Panc1 (cell line): ENCODE measurements at regions of chr1 and their contacts with region 1.

Region 1: GRCh38 chr1:65535981-65536380 is 115.5 kb downstream of the LEPR start:
- DNase-seq: no peak
- ATAC-seq: no peak
- H3K4me3 ChIP-seq: no peak overlapping the region
- H3K27ac ChIP-seq: no peak overlapping the region
- H3K4me1 ChIP-seq: no peaks in the 10 kb centered on the region
- H3K27me3 ChIP-seq: no peaks in the 10 kb centered on the region
- CTCF ChIP-seq: no peak

Region 2: GRCh38 chr1:65469889-65470340 is 66.1 kb before region 1 on chr1:
- CTCF ChIA-PET with region 1: no interaction called
- POLR2A ChIA-PET with region 1: no interaction called
- in situ Hi-C with region 1: no loop called
- intact Hi-C with region 1: loop called (anchors 2 kb)
- DNase-seq: no peak
- ATAC-seq: no peak
- H3K4me3 ChIP-seq: no peak overlapping the region
- H3K27ac ChIP-seq: no peak overlapping the region
- H3K4me1 ChIP-seq: no peaks in the 10 kb centered on the region
- H3K27me3 ChIP-seq: no peaks in the 10 kb centered on the region
- CTCF ChIP-seq: no peak

Region 3: GRCh38 chr1:65514083-65514482 is 21.9 kb before region 1 on chr1:
- CTCF ChIA-PET with region 1: no interaction called
- POLR2A ChIA-PET with region 1: no interaction called
- in situ Hi-C with region 1: no loop called
- intact Hi-C with region 1: no loop called
- DNase-seq: no peak
- ATAC-seq: no peak
- H3K4me3 ChIP-seq: no peak overlapping the region
- H3K27ac ChIP-seq: no peak overlapping the region
- H3K4me1 ChIP-seq: no peaks in the 10 kb centered on the region
- H3K27me3 ChIP-seq: no peaks in the 10 kb centered on the region
- CTCF ChIP-seq: no peak

Region 4: GRCh38 chr1:65558215-65558614 is 22.2 kb after region 1 on chr1:
- CTCF ChIA-PET with region 1: no interaction called
- POLR2A ChIA-PET with region 1: no interaction called
- in situ Hi-C with region 1: no loop called
- intact Hi-C with region 1: no loop called
- DNase-seq: no peak
- ATAC-seq: no peak
- H3K4me3 ChIP-seq: no peak overlapping the region
- H3K27ac ChIP-seq: no peak overlapping the region
- H3K4me1 ChIP-seq: no peaks in the 10 kb centered on the region
- H3K27me3 ChIP-seq: no peaks in the 10 kb centered on the region
- CTCF ChIP-seq: no peak